Endothelial cell of umbilical vein (primary cell): ENCODE measurements at regions of chr1 and their contacts with region 1.

Region 1: DNA sequence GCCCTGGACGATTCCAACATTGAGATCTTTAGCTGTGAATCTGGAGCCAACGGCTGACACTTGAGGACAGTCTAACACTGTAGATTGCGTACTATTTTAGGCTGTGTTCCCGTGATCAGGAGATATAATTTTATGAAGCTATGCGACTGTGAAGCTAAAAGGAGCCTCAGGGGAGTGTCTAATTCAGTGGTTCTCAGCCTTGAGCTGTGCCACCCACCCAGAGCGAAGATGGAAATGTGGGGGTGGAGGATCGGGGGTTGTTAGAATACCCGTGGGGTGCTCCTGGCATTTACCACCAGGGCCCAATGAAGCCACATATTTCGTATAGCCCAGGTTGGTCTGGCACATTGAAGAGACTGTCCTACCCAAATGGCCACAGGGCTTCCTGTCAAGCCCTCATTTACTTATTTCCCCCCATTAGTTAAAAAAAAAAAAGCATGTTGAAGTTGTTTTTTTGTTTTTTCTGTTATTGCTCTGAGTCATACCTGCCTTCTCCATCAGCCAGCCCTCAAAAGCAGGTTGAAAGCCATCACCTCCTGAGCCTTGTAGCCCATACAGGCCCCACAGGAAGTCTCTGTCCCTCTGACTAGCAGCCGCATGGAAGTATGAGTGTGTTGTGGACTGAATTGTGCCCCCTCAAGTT is 141.7 kb downstream of the GALNT2 start:
- DNase-seq: no peak
- H3K4me3 ChIP-seq: no peak overlapping the region
- H3K27ac ChIP-seq: peak overlapping the region; percentile 83
- H3K4me1 ChIP-seq: peaks cover 38% of the 10 kb centered on the region
- H3K27me3 ChIP-seq: no peaks in the 10 kb centered on the region
- CTCF ChIP-seq: no peak
- POLR2A ChIP-seq: no peak

Region 2: GRCh38 chr1:229625915-229626831 is 582.6 kb before region 1 on chr1 and contains the starts of genes TAF5L and URB2:
- CTCF ChIA-PET with region 1: no interaction called
- POLR2A ChIA-PET with region 1: no interaction called
- dilution Hi-C with region 1: no loop called
- intact Hi-C with region 1: loop called (anchors 1 kb)
- DNase-seq: peak; percentile 84
- H3K4me3 ChIP-seq: peak within 1 kb of the TSS; percentile 75 to 98 (median 96)
- H3K27ac ChIP-seq: peak within 1 kb of the TSS; percentile 41
- H3K4me1 ChIP-seq: peaks cover 16% of the 10 kb centered on the region
- H3K27me3 ChIP-seq: no peaks in the 10 kb centered on the region
- CTCF ChIP-seq: no peak
- POLR2A ChIP-seq: peak; percentile 69
- total RNA-seq, gene TAF5L: 20.3 and 24.8 TPM in 2 replicates
- total RNA-seq, gene URB2: 12.4 and 12.7 TPM in 2 replicates

Region 3: GRCh38 chr1:230160957-230161771 is 47.6 kb before region 1 on chr1:
- CTCF ChIA-PET with region 1: no interaction called
- POLR2A ChIA-PET with region 1: interaction called, 3 read pairs
- dilution Hi-C with region 1: no loop called
- intact Hi-C with region 1: loop called (anchors 1 kb)
- DNase-seq: peak; percentile 93
- H3K4me3 ChIP-seq: no peak overlapping the region
- H3K27ac ChIP-seq: no peak overlapping the region
- H3K4me1 ChIP-seq: peaks cover 15% of the 10 kb centered on the region
- H3K27me3 ChIP-seq: peaks cover 0 to 5% of the 10 kb centered on the region in 2 experiments
- CTCF ChIP-seq: no peak
- POLR2A ChIP-seq: no peak

Region 4: GRCh38 chr1:230186003-230186863 is 22.5 kb before region 1 on chr1:
- CTCF ChIA-PET with region 1: interaction called, 9 read pairs
- POLR2A ChIA-PET with region 1: no interaction called
- dilution Hi-C with region 1: no loop called
- intact Hi-C with region 1: loop called (anchors 1 kb)
- DNase-seq: peak; percentile 92
- H3K4me3 ChIP-seq: no peak overlapping the region
- H3K27ac ChIP-seq: peak overlapping the region; percentile 10
- H3K4me1 ChIP-seq: peaks cover 25% of the 10 kb centered on the region
- H3K27me3 ChIP-seq: no peaks in the 10 kb centered on the region
- CTCF ChIP-seq: no peak
- POLR2A ChIP-seq: no peak

Region 5: GRCh38 chr1:230191079-230191804 is 17.5 kb before region 1 on chr1:
- CTCF ChIA-PET with region 1: interaction called, 9 read pairs
- POLR2A ChIA-PET with region 1: interaction called, 3 read pairs
- dilution Hi-C with region 1: no loop called
- intact Hi-C with region 1: loop called (anchors 1 kb)
- DNase-seq: peak; percentile 83
- H3K4me3 ChIP-seq: no peak overlapping the region
- H3K27ac ChIP-seq: peak overlapping the region; percentile 57
- H3K4me1 ChIP-seq: peaks cover 25% of the 10 kb centered on the region
- H3K27me3 ChIP-seq: no peaks in the 10 kb centered on the region
- CTCF ChIP-seq: no peak
- POLR2A ChIP-seq: no peak